ENCODE measurements at regions of chr11 and their contacts with region 1.

Region 1: GRCh38 chr11:117037279-117037974 is 60.8 kb downstream of the SIK3 start:
- DNase-seq: no peak
- H3K4me3 ChIP-seq: no peak overlapping the region
- H3K27ac ChIP-seq: peak overlapping the region in 3 of 5 donors; percentile 35 to 64 (median 53)
- H3K4me1 ChIP-seq: peaks cover 17 to 39% of the 10 kb centered on the region in 2 donors
- H3K27me3 ChIP-seq: no peaks in the 10 kb centered on the region
- CTCF ChIP-seq: no peak
- POLR2A ChIP-seq: no peak

Region 2: DNA sequence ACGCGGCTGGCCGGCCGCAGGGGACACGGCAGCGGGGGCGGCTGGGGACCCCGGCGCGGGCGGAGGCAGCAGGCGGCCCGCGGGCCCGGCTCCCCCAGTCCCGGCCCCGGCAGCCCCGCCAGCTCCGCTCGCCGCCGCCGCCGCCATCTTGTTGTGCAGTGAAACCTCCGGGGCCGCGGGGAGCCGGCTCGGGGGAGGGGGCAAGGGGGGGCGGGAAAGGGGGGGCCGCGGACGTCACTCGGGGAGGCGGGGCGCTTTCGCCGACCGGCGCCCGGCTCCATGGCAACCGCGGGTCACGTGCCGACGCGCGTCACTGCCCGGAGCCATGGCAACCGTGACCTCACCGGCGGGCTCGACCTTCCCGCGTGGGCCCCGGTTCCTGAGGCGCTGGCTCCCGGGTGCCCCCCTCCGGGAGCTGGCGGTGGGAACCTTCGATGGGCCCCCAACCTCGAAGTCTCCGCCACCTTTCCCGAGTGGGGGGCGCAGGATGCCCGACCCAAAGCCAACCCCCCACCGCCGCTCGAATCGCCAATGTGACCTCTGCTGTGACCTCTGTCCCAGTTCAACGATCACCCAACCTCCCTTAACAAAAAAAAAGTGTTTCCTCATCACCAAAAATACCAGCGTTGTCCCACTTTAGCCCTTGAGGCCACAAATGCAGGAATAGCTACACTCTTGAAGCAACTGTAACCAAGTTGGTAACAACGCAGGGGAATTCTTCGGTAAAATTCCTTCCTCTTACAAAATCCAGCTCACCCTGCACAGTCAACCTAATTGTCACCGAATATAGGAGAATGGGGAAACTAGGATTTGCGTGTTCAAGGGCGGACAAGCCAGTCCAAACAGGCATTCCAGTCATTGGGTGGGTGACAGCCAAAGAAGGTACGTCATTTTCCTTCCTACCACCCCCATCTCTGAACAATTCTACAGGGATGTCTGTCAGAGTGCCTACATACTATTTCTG is 61.1 kb after region 1 on chr11 and contains the start of gene SIK3:
- intact Hi-C with region 1: loop called in 1 of 2 experiments (anchors 10 kb)
- DNase-seq: peak; percentile 92 to 97 (median 95)
- H3K4me3 ChIP-seq: peak within 1 kb of the TSS; percentile 75 to 99 (median 85)
- H3K27ac ChIP-seq: peak within 1 kb of the TSS; percentile 91 to 99 (median 96)
- H3K4me1 ChIP-seq: peaks cover 22 to 44% of the 10 kb centered on the region in 2 donors
- H3K27me3 ChIP-seq: no peaks in the 10 kb centered on the region
- CTCF ChIP-seq: peak in 5 of 6 experiments; percentile 17 to 50 (median 44)
- POLR2A ChIP-seq: peak; percentile 41 to 58
- total RNA-seq, gene SIK3: 14.6 to 176 (median 31.2) TPM

Measured in adrenal gland (tissue), 19 donors.